ENCODE measurements at regions of chr5 and their contacts with region 1.

Region 1: GRCh38 chr5:53422539-53422938 is 57.9 kb upstream of the FST start:
- H3K4me3 Mint-ChIP-seq: no peak overlapping the region
- H3K27ac Mint-ChIP-seq: peak overlapping the region; percentile 39
- H3K4me1 Mint-ChIP-seq: peaks cover 10% of the 10 kb centered on the region
- H3K27me3 Mint-ChIP-seq: peaks cover 3% of the 10 kb centered on the region

Region 2: DNA sequence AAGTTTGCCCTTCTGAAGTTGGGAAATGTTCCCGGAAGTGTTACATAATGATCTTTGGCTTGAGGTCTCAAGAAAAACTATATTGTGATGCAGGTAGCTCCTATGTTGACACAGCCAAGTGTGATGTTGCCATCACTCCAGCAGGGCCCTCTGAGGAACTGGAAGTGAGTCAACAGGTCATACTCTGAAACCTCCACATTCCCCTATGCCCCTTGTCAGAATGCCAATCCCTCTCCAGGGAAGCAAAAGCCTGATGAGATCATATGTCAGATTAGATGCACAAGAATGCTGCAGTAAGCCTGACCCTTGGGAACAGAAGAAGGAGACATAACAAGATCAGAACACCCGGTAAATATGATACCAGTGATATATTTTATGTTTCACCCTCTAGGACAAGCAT is 500.2 kb before region 1 on chr5:
- intact Hi-C with region 1: no loop called
- H3K4me3 Mint-ChIP-seq: no peak overlapping the region
- H3K27ac Mint-ChIP-seq: no peak overlapping the region
- H3K4me1 Mint-ChIP-seq: peaks cover 8% of the 10 kb centered on the region
- H3K27me3 Mint-ChIP-seq: peaks cover 3% of the 10 kb centered on the region

Region 3: DNA sequence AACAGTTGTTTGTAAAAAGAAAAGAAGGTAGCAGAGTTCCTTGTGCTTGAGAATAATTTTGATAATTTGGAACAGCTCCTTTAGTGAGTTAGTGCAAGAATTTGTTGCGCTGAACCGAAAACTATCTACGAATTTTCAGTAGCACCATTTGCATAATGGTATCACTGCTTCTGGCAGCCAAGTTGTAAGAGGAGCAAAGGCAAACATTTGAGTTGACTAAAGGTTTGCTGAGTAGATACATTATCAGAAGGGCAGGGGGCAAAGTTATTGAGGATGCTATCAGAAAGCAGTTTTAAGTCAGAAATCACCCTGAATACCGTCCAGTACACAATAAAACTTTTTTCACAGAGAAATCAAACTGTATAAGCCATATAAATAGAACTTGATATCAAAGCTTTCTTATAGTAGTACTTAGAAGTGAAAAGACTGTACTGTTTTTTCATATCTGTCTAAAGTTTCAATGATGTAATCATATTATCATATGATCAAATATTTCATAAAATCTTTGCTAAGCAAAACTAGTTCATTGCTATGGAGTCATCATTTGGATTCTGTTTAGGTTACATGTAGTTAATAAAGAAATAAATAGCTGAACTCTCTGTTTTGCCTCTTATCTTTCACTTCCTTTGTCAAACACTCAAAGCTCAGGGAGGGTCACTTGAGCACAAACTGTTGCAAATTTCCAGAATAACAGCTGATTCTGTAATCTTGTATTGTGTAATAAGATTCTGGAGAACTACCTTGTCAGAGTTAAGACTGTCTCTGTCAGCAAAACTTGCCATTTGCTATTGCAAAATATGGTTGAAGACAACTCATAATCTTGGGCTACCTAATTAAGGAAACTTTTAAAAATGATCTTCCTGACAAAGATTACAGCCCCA is 131.3 kb before region 1 on chr5:
- intact Hi-C with region 1: loop called (anchors 1 kb)
- H3K4me3 Mint-ChIP-seq: no peak overlapping the region
- H3K27ac Mint-ChIP-seq: peak overlapping the region; percentile 74
- H3K4me1 Mint-ChIP-seq: peaks cover 20% of the 10 kb centered on the region
- H3K27me3 Mint-ChIP-seq: peaks cover 2% of the 10 kb centered on the region

Region 4: DNA sequence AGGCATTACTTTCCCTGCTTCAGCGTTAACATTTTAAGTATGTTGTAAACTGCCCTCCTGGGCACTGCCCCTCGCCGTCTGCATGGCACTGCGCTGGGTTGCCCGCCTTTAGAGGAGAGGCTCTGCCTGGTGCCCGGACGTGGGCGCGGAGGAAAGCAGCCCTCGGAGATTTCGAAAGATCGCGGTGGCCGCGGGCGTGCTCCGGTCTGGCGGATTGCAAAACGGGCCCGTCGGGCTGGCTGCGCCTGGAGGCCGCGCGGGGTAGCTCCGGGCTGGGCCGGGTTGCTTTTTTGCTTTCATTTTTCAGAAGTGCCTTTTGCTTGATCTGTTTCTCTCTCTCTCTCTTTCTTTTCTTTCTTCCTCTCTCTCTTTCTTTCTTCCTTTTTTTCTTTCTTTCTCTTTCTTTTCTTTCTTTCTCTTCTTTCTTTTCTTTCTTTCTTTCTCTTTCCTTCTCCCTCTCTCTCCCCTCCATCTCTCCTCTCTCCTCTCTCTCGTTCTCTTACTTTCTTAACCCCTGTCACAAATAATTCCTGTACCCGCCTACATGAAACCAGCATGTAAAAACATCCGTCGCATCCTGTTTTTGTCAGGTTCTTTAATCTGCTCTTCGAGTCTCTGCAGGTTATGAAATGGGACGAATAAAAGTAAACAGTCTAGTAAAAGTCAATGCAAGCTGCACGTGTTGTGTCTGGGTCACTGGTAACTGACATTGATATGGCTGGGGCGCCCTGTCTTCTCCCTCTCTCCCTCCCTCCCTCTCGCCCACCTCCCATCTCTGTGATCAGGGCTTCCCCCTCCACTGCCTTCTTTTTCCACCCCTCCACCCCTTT is 59.6 kb after region 1 on chr5:
- intact Hi-C with region 1: no loop called
- H3K4me3 Mint-ChIP-seq: peak overlapping the region; percentile 86
- H3K27ac Mint-ChIP-seq: peak overlapping the region; percentile 43
- H3K4me1 Mint-ChIP-seq: peaks cover 44% of the 10 kb centered on the region
- H3K27me3 Mint-ChIP-seq: peaks cover 62% of the 10 kb centered on the region

Region 5: DNA sequence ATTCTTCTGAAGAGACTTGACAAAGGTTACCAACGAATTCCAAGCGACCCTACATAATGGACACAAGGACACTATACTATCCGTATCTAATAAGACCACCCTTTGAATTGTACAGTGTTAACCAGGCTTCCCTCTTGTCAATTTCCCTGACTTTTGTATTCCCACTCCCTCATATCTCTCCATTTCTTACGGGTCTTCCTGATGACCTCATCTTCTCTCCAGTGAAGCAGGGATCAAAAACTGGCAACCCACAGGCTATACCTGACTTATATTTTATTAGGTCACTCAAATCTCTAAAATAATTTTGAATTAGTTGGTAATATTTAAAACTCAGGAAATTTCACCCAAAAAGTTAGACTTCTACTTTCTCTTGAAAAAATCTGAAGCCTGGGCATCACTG is 72.0 kb after region 1 on chr5:
- intact Hi-C with region 1: no loop called
- H3K4me3 Mint-ChIP-seq: no peak overlapping the region
- H3K27ac Mint-ChIP-seq: no peak overlapping the region
- H3K4me1 Mint-ChIP-seq: no peaks in the 10 kb centered on the region
- H3K27me3 Mint-ChIP-seq: peaks cover 5% of the 10 kb centered on the region